ENCODE measurements at regions of chr1 and their contacts with region 1.

Region 1: DNA sequence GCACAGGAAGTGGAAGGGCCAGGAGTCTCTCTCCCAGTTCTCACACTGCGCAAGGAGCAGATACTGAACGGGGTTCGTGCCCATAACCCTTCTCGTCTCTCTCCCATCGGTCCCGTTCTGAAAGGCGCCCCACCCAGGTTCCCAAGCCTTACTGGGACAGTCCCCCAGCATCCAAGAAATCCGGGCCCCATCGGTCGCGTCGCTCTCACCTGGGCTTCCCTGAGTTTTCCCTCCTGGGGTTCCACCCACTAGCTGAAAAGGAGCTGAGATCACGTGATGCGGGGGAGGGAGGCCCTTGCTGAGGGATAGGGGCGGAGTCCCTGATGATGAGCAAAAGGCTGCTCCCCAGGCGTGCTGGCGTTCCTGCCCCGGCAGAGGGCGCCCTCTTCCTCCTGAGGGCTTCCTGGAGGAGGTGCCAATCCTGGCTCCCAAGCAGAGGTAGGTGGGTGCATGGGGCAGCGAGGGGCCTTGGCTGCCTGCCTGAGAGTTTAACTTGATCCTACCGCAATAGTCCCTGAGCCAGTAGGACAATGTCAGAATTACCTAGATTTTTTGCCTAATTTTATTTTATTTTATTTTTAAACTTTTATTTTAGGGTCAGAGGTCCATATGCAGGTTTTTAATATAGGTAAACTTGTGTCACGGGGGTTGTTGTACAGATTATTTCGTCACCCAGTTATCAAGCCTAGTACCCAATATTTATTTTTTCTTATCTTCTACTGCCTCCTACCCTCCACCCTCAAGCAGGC is at the start of gene SPOCD1:
- DNase-seq: peak; percentile 78 to 84 (median 79)
- H3K4me3 ChIP-seq: no peak within 1 kb of the TSS
- H3K4me3 Mint-ChIP-seq: peak within 1 kb of the TSS in 2 of 8 donors; percentile 1 to 64
- H3K27ac ChIP-seq: no peak within 1 kb of the TSS
- H3K27ac Mint-ChIP-seq: peak within 1 kb of the TSS; percentile 32 to 88 (median 42)
- H3K4me1 ChIP-seq: peaks cover 8% of the 10 kb centered on the region
- H3K4me1 Mint-ChIP-seq: peaks cover 8 to 21% (median 14%) of the 10 kb centered on the region in 4 donors
- H3K27me3 ChIP-seq: no peaks in the 10 kb centered on the region
- H3K27me3 Mint-ChIP-seq: peaks cover 0 to 1% of the 10 kb centered on the region in 2 donors
- total RNA-seq, gene SPOCD1: 0.61 to 0.94 TPM

Region 2: DNA sequence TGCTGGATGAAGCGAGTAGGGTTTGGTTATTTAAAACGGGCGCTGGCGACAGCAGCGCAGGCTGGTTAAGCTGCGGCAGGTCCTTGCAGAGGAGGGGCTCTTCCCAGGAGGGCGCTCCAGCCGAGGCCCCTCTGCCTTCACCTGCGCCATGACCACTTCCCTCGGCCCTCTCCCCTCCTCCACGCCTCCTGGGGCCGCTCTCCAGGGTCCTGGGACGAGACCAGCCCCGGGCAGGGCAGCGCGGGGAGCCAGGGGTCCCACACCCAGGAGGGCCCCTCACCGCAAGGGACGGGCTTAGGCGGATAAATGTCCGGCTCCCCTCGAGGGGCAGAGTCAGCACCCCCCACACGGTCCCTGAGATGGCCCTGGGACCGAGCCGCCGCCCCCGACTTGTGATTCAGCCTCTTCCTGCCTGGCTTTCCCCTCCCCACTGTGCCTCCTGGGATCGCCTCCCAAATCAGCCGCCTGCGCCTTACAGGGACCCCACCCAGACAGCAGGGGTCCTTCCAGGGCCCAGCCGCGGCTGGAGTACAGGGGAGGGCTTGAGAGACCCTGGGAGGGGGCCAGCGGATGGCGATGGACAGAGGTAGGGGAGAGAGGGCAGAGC is 1473.3 kb before region 1 on chr1:
- CTCF ChIA-PET with region 1: no interaction called
- POLR2A ChIA-PET with region 1: no interaction called
- intact Hi-C with region 1: no loop called
- DNase-seq: no peak
- H3K4me3 ChIP-seq: no peak overlapping the region
- H3K4me3 Mint-ChIP-seq: no peak overlapping the region
- H3K27ac ChIP-seq: no peak overlapping the region
- H3K27ac Mint-ChIP-seq: no peak overlapping the region
- H3K4me1 ChIP-seq: no peaks in the 10 kb centered on the region
- H3K4me1 Mint-ChIP-seq: no peaks in the 10 kb centered on the region
- H3K27me3 ChIP-seq: peaks cover 5% of the 10 kb centered on the region
- H3K27me3 Mint-ChIP-seq: peaks cover 4 to 14% of the 10 kb centered on the region in 2 donors

Region 3: DNA sequence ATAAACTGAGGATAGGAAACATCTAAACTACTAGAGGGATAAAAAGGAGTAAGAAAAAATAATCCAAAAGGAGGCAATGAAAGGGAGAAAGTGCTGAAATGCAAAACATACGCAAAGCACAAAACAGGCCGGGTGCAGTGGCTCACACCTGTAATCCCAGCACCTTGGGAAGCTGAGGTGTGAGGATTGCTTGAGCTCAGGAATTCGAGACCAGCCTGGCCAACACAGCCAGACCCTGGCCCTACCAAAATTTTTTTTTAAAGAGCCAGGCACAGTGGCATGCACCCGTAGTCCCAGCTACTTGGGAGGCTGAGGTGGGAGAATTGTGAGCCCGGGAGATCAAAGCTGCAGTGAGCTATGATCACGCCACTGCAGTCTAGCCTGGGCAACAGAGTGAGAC is 10.6 kb before region 1 on chr1:
- CTCF ChIA-PET with region 1: interaction called, 10 read pairs
- POLR2A ChIA-PET with region 1: no interaction called
- intact Hi-C with region 1: no loop called
- DNase-seq: no peak
- H3K4me3 ChIP-seq: no peak overlapping the region
- H3K4me3 Mint-ChIP-seq: no peak overlapping the region
- H3K27ac ChIP-seq: no peak overlapping the region
- H3K27ac Mint-ChIP-seq: no peak overlapping the region
- H3K4me1 ChIP-seq: no peaks in the 10 kb centered on the region
- H3K4me1 Mint-ChIP-seq: peaks cover 2 to 10% (median 6%) of the 10 kb centered on the region in 4 donors
- H3K27me3 ChIP-seq: no peaks in the 10 kb centered on the region
- H3K27me3 Mint-ChIP-seq: peaks cover 0 to 1% of the 10 kb centered on the region in 2 donors

Region 4: GRCh38 chr1:31831397-31832378 is 15.8 kb after region 1 on chr1:
- CTCF ChIA-PET with region 1: interaction called, 6 read pairs
- POLR2A ChIA-PET with region 1: interaction called, 7 read pairs
- intact Hi-C with region 1: loop called (anchors 1 kb)
- DNase-seq: no peak
- H3K4me3 ChIP-seq: no peak overlapping the region
- H3K4me3 Mint-ChIP-seq: no peak overlapping the region
- H3K27ac ChIP-seq: no peak overlapping the region
- H3K27ac Mint-ChIP-seq: peak overlapping the region in 2 of 7 donors; percentile 13 to 27
- H3K4me1 ChIP-seq: peaks cover 27% of the 10 kb centered on the region
- H3K4me1 Mint-ChIP-seq: peaks cover 24 to 36% (median 27%) of the 10 kb centered on the region in 4 donors
- H3K27me3 ChIP-seq: no peaks in the 10 kb centered on the region
- H3K27me3 Mint-ChIP-seq: no peaks in the 10 kb centered on the region

Region 5: GRCh38 chr1:31848381-31848897 is 32.5 kb after region 1 on chr1:
- CTCF ChIA-PET with region 1: interaction called, 16 read pairs
- POLR2A ChIA-PET with region 1: no interaction called
- intact Hi-C with region 1: no loop called
- DNase-seq: peak; percentile 47 to 66 (median 65)
- H3K4me3 ChIP-seq: peak overlapping the region; percentile 7 to 51
- H3K4me3 Mint-ChIP-seq: peak overlapping the region; percentile 61 to 88 (median 78)
- H3K27ac ChIP-seq: peak overlapping the region; percentile 16
- H3K27ac Mint-ChIP-seq: peak overlapping the region; percentile 65 to 96 (median 90)
- H3K4me1 ChIP-seq: peaks cover 48% of the 10 kb centered on the region
- H3K4me1 Mint-ChIP-seq: peaks cover 43 to 62% (median 51%) of the 10 kb centered on the region in 4 donors
- H3K27me3 ChIP-seq: no peaks in the 10 kb centered on the region
- H3K27me3 Mint-ChIP-seq: no peaks in the 10 kb centered on the region

Region 6: GRCh38 chr1:31910933-31911332 is 95.0 kb after region 1 on chr1:
- CTCF ChIA-PET with region 1: interaction called, 10 read pairs
- POLR2A ChIA-PET with region 1: interaction called, 3 read pairs
- intact Hi-C with region 1: no loop called
- DNase-seq: no peak
- H3K4me3 ChIP-seq: no peak overlapping the region
- H3K4me3 Mint-ChIP-seq: peak overlapping the region in 4 of 8 donors; percentile 7 to 22 (median 20)
- H3K27ac ChIP-seq: peak overlapping the region; percentile 37
- H3K27ac Mint-ChIP-seq: peak overlapping the region; percentile 0 to 86 (median 69)
- H3K4me1 ChIP-seq: peaks cover 50% of the 10 kb centered on the region
- H3K4me1 Mint-ChIP-seq: peaks cover 33 to 53% (median 45%) of the 10 kb centered on the region in 4 donors
- H3K27me3 ChIP-seq: no peaks in the 10 kb centered on the region
- H3K27me3 Mint-ChIP-seq: no peaks in the 10 kb centered on the region

Region 7: DNA sequence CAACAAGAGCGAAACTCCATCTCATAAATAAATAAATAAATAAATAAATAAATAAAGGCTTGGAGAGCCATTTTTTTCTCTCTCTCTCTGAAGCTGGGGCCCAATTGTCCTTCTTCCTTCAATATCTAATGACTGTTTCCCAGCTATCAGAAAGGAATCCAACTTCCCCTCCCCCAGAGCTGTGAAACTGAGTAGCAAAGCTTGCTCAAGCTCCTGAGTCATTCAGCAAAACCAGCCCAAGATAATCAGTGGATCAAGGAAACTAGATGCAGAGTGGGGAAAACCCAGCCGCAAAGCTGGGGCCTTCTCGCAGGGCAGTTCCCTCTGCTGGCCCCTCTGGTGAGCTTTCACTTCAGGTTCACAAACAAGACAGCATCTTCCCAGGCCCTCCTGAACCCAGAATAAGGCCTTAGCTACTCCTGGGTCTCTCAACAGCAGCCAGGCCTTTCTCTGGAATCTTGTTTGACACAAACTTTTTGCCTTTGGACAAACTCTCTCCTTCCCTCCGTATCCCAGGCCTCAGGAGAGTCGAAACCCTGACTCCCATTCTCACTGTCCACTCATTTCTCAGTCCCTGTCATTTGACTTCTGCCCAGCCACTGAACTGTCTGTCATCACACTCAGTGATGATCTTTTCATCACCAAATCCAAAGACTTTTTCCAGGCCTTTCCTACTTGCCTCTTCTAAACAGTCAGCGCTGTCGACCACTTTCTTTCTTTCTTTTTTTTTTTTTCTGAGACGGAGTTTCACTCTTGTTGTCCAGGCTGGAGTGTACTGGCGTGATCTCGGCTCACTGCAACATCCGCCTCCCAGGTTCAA is 140.2 kb after region 1 on chr1:
- CTCF ChIA-PET with region 1: interaction called, 105 read pairs
- POLR2A ChIA-PET with region 1: no interaction called
- intact Hi-C with region 1: no loop called
- DNase-seq: peak; percentile 72 to 93 (median 76)
- H3K4me3 ChIP-seq: no peak overlapping the region
- H3K4me3 Mint-ChIP-seq: peak overlapping the region in 7 of 8 donors; percentile 70 to 86 (median 78)
- H3K27ac ChIP-seq: peak overlapping the region; percentile 78
- H3K27ac Mint-ChIP-seq: peak overlapping the region; percentile 91 to 96 (median 93)
- H3K4me1 ChIP-seq: peaks cover 70% of the 10 kb centered on the region
- H3K4me1 Mint-ChIP-seq: peaks cover 49 to 85% (median 63%) of the 10 kb centered on the region in 4 donors
- H3K27me3 ChIP-seq: no peaks in the 10 kb centered on the region
- H3K27me3 Mint-ChIP-seq: no peaks in the 10 kb centered on the region

Region 8: DNA sequence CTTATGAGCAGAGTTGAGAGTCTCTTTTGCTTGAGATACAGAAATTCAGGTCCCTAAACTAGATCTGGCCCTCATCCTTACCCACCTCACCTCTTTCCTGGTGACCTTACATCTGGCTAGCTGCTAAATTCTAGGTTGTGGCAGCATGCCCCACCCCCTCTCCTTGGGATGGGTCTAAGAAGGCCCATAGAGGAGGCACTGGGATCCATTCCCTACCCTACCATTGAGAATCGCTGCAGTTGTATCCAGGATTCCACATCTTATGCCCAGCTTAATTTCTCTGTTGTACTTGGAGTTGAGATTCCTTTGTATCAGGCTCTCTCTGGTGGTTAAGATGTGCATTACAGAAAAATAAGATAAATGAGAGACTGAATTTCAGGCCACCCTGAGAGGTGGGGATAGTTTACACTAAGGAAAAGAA is 247.3 kb after region 1 on chr1:
- CTCF ChIA-PET with region 1: interaction called, 3 read pairs
- POLR2A ChIA-PET with region 1: no interaction called
- intact Hi-C with region 1: loop called (anchors 5 kb)
- DNase-seq: peak in 4 of 5 donors; percentile 16 to 41 (median 36)
- H3K4me3 ChIP-seq: no peak overlapping the region
- H3K4me3 Mint-ChIP-seq: no peak overlapping the region
- H3K27ac ChIP-seq: no peak overlapping the region
- H3K27ac Mint-ChIP-seq: peak overlapping the region in 6 of 7 donors; percentile 25 to 85 (median 70)
- H3K4me1 ChIP-seq: peaks cover 13% of the 10 kb centered on the region
- H3K4me1 Mint-ChIP-seq: peaks cover 8 to 23% (median 13%) of the 10 kb centered on the region in 4 donors
- H3K27me3 ChIP-seq: no peaks in the 10 kb centered on the region
- H3K27me3 Mint-ChIP-seq: no peaks in the 10 kb centered on the region

Measured in CD4-positive, alpha-beta memory T cell (primary cell).